ENCODE measurements at regions of chr1 and their contacts with region 1.

Region 1: DNA sequence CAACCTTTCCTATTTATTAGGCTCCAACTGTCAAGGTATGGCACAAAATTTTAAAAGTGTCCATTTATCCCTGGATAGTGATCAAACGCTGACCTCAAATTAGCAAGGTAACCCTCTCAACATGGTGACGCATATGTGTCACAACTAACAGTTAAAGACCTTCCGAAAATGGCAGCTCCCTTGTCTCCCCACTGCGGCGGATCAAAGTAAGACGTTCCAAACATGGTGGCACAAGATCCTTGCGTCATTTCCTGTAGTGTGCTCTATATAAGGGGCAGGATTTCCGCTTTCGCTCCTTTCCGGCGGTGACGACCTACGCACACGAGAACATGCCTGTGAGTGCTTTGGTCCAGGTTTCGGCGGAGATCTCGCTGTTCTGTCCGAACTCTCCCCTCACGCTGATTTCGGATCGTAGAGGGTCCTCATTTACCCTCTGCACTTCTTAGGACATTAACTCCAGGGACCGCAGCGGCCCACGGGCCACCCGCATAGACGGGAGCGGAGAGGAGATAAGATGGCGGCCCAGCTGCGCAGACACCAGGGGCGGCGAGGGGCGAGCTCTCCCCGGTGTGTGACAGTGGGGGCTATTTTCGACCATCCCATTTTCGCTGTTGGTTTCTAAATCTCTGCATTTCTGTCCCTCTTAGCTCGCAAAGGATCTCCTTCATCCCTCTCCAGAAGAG is at the start of gene RPS27:
- DNase-seq: peak; percentile 95
- ATAC-seq: peak; percentile 80
- H3K4me3 ChIP-seq: peak within 1 kb of the TSS; percentile 87 to 92
- H3K27ac ChIP-seq: peak within 1 kb of the TSS; percentile 97
- H3K4me1 ChIP-seq: peaks cover 13% of the 10 kb centered on the region
- H3K27me3 ChIP-seq: no peaks in the 10 kb centered on the region
- CTCF ChIP-seq: no peak
- total RNA-seq, gene RPS27: 1,095 TPM

Region 2: GRCh38 chr1:153796791-153797659 is 193.6 kb before region 1 on chr1:
- CTCF ChIA-PET with region 1: interaction called, 5 read pairs
- POLR2A ChIA-PET with region 1: interaction called, 7 read pairs
- in situ Hi-C with region 1: no loop called
- intact Hi-C with region 1: loop called (anchors 2 kb)
- DNase-seq: peak; percentile 57
- ATAC-seq: peak; percentile 85
- H3K4me3 ChIP-seq: no peak overlapping the region
- H3K27ac ChIP-seq: no peak overlapping the region
- H3K4me1 ChIP-seq: no peaks in the 10 kb centered on the region
- H3K27me3 ChIP-seq: no peaks in the 10 kb centered on the region
- CTCF ChIP-seq: peak; percentile 94

Region 3: DNA sequence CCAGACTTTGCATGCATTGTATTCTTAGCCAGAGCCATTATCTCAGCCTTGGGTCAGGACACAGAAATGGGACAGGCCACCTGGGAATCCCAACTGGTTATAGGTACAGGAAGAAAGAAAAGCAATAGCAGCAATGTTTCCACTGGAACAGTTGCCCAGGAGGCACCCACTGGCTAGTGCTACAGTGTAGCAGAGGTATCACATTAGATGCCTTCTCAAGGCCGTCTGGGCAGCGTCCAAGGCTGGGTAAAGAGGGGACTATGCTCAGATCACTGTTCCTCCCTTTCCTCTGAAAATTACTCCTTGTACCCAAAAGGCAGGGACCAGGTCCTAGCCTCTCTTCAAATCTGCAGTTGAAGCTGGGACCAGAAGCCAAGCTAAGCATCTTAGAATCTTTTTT is 20.3 kb before region 1 on chr1:
- CTCF ChIA-PET with region 1: interaction called, 6 read pairs
- POLR2A ChIA-PET with region 1: interaction called, 11 read pairs
- in situ Hi-C with region 1: no loop called
- intact Hi-C with region 1: no loop called
- DNase-seq: no peak
- ATAC-seq: no peak
- H3K4me3 ChIP-seq: no peak overlapping the region
- H3K27ac ChIP-seq: no peak overlapping the region
- H3K4me1 ChIP-seq: peaks cover 9% of the 10 kb centered on the region; the same call in 1 of the 2 replicates
- H3K27me3 ChIP-seq: no peaks in the 10 kb centered on the region
- CTCF ChIP-seq: no peak